ENCODE measurements at regions of chr15 and their contacts with region 1.

Region 1: DNA sequence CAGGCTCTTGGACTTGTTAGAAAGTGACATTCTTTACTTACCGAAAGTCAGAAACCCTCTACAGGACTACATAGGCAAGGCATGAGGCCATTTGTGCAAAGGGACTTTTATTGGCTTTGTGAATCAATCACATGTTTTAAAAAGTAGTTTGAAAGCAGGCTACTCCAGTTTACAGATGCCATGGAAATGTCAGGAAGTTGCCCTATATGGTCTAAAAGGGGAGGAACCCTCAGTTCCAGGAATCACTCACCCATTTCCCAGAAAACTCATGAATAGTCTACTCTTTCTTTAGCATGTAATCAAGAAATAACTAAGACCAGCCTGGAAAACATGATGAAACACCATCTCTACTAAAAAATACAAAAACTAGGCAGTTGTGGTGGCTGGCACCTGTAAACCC is 51.0 kb upstream of the MKRN3 start:
- DNase-seq: no peak
- H3K4me3 ChIP-seq: no peak overlapping the region
- H3K4me3 Mint-ChIP-seq: no peak overlapping the region
- H3K27ac Mint-ChIP-seq: no peak overlapping the region
- H3K4me1 ChIP-seq: peaks cover 10% of the 10 kb centered on the region
- H3K4me1 Mint-ChIP-seq: no peaks in the 10 kb centered on the region
- H3K27me3 ChIP-seq: no peaks in the 10 kb centered on the region; the same call in 1 of the 2 replicates
- H3K27me3 Mint-ChIP-seq: peaks cover 3% of the 10 kb centered on the region
- CTCF ChIP-seq: no peak

Region 2: GRCh38 chr15:23415321-23415865 is 99.1 kb before region 1 on chr15:
- CTCF ChIA-PET with region 1: no interaction called
- POLR2A ChIA-PET with region 1: no interaction called
- intact Hi-C with region 1: no loop called
- DNase-seq: peak in 1 of 2 experiments; percentile 18
- H3K4me3 ChIP-seq: no peak overlapping the region
- H3K4me3 Mint-ChIP-seq: no peak overlapping the region
- H3K27ac Mint-ChIP-seq: no peak overlapping the region
- H3K4me1 ChIP-seq: no peaks in the 10 kb centered on the region
- H3K4me1 Mint-ChIP-seq: no peaks in the 10 kb centered on the region
- H3K27me3 ChIP-seq: no peaks in the 10 kb centered on the region
- H3K27me3 Mint-ChIP-seq: no peaks in the 10 kb centered on the region
- CTCF ChIP-seq: no peak

Region 3: DNA sequence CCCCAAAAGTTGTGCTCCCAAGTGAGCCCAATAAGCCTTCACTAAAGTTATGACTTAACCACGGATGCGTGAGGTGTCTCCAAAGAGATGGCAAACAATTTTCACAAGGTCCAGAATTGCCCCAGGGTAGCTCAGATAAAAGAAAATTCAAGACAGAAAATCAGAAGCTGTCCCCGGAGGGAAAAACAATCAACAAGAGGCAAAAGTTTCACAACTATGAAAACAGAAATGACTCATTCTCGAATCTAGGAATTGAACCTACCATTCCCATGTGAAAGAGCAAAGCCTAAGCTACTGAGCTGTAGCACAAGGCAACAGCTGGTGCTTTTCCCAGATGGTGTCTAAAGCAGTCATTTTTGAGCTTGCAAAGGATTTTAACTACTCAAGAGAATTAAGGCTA is 17.5 kb after region 1 on chr15:
- CTCF ChIA-PET with region 1: no interaction called
- POLR2A ChIA-PET with region 1: no interaction called
- intact Hi-C with region 1: loop called (anchors 1 kb)
- DNase-seq: no peak
- H3K4me3 ChIP-seq: no peak overlapping the region
- H3K4me3 Mint-ChIP-seq: no peak overlapping the region
- H3K27ac Mint-ChIP-seq: no peak overlapping the region
- H3K4me1 ChIP-seq: 0 out of 2 replicates have a peak, but pooled peaks cover 4% of the 10 kb centered on the region
- H3K4me1 Mint-ChIP-seq: peaks cover 4% of the 10 kb centered on the region
- H3K27me3 ChIP-seq: no peaks in the 10 kb centered on the region
- H3K27me3 Mint-ChIP-seq: peaks cover 2% of the 10 kb centered on the region
- CTCF ChIP-seq: no peak

Measured in Caco-2 (cell line).